ENCODE measurements at regions of chr6 and their contacts with region 1.

Region 1: GRCh38 chr6:158718461-158719046 is 68.7 kb downstream of the SYTL3 start:
- DNase-seq: peak; percentile 77 to 82
- H3K4me3 ChIP-seq: no peak overlapping the region
- H3K27ac ChIP-seq: no peak overlapping the region
- H3K4me1 ChIP-seq: peaks cover 0 to 9% (median 3%) of the 10 kb centered on the region in 4 experiments; a peak in 4 of 7 replicates
- H3K27me3 ChIP-seq: no peaks in the 10 kb centered on the region
- CTCF ChIP-seq: peak; percentile 84 to 94 (median 93)
- EP300 ChIP-seq: no peak; a peak in 1 of 3 replicates
- POLR2A ChIP-seq: no peak
- RAD21 ChIP-seq: peak; percentile 95

Region 2: DNA sequence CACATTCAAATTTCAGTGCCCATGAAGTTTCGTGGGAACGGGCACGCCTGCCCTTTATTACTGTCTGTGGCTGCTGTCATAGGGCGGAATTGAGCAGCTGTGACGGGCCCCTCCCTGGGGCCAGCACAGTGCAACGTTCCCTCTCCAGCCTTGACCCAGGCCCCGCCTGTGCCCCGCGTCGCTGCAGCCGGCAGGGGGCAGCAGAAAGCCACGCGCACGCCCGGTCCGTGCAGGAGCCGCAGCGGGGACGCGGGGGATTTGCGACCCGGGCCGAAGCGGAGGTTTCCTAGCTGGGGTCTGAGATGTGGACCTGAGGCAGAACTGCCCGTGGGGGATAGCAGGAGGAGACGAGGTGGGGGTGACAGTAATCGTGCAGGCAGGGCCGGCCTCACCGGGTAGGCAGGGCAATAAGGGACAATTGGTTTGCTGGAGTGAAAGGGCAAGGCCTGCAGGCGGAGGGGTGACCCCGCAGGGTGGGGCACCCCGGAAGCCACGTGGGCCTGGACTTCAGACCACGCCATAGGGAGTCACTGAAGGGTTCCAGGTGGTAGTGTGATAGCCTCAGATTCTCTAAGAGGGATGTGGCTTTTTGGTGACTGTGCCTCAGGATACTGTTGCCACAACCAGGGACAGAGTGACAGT is 14.3 kb before region 1 on chr6:
- CTCF ChIA-PET with region 1: interaction called, 37 read pairs
- POLR2A ChIA-PET with region 1: interaction called, 4 read pairs
- DNase-seq: peak; percentile 41 to 97
- H3K4me3 ChIP-seq: peak overlapping the region in 3 of 4 experiments; percentile 4 to 46 (median 19); a peak in 3 of 8 replicates
- H3K27ac ChIP-seq: no peak overlapping the region
- H3K4me1 ChIP-seq: peaks cover 0 to 4% (median 1%) of the 10 kb centered on the region in 4 experiments; a peak in 1 of 7 replicates
- H3K27me3 ChIP-seq: no peaks in the 10 kb centered on the region
- CTCF ChIP-seq: peak; percentile 93 to 94 (median 94)
- EP300 ChIP-seq: no peak
- POLR2A ChIP-seq: no peak
- RAD21 ChIP-seq: peak; percentile 95

Region 3: DNA sequence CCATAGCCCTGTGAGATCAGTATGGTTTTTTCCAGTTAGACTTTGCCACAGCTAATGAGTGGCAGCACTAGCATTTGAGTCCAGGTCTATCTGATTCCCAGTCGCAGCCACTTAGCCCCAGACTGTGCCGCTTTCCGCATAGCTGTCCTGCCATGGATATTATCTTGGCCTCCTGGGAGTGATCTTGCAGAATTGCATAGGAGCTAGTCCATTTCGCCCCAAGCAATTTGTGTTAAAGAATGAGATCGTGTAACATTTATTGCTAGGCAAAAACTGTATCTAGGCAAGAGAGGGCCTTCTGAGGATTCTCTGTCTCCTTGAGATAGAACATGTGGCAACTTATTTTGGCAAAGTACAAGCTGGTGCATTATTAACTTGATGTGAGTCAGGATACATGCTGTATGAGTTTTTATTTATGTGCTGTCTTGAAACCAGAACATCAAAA is 26.5 kb after region 1 on chr6:
- CTCF ChIA-PET with region 1: interaction called, 19 read pairs
- POLR2A ChIA-PET with region 1: no interaction called
- DNase-seq: no peak
- H3K4me3 ChIP-seq: no peak overlapping the region
- H3K27ac ChIP-seq: no peak overlapping the region
- H3K4me1 ChIP-seq: no peaks in the 10 kb centered on the region
- H3K27me3 ChIP-seq: no peaks in the 10 kb centered on the region
- CTCF ChIP-seq: no peak
- EP300 ChIP-seq: no peak
- POLR2A ChIP-seq: no peak
- RAD21 ChIP-seq: no peak

Region 4: DNA sequence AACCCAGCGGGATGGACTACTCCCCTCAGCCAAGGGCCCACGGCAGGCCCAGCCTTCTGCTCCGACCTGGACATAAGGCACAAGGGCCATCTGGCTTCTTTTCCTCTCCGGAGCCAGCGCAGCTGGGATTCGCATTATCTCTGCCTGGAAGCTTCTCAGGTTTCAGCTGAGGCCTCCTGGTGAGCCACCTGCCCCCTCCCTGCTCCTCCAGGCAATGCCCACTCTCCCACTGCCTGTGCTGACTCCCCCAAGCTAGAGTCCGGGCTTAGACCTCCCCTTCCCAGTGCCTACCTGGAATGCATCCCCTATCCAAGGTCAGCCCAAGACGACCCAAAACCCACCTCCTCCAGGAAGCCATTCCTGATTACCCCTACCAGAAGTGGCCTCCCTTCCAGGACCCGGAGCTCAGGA is 39.9 kb after region 1 on chr6:
- CTCF ChIA-PET with region 1: interaction called, 7 read pairs
- POLR2A ChIA-PET with region 1: interaction called, 38 read pairs
- DNase-seq: peak; percentile 34 to 71
- H3K4me3 ChIP-seq: no peak overlapping the region
- H3K27ac ChIP-seq: no peak overlapping the region
- H3K4me1 ChIP-seq: peaks cover 0 to 20% (median 10%) of the 10 kb centered on the region in 4 experiments; a peak in 6 of 7 replicates
- H3K27me3 ChIP-seq: no peaks in the 10 kb centered on the region
- CTCF ChIP-seq: no peak
- EP300 ChIP-seq: no peak
- POLR2A ChIP-seq: no peak
- RAD21 ChIP-seq: no peak

Region 5: GRCh38 chr6:158784505-158784904 is 66.0 kb after region 1 on chr6:
- CTCF ChIA-PET with region 1: interaction called, 18 read pairs
- POLR2A ChIA-PET with region 1: no interaction called
- DNase-seq: no peak
- H3K4me3 ChIP-seq: no peak overlapping the region
- H3K27ac ChIP-seq: no peak overlapping the region
- H3K4me1 ChIP-seq: peaks cover 0 to 2% (median under 1%) of the 10 kb centered on the region in 4 experiments; a peak in 2 of 7 replicates
- H3K27me3 ChIP-seq: no peaks in the 10 kb centered on the region
- CTCF ChIP-seq: no peak
- EP300 ChIP-seq: no peak
- POLR2A ChIP-seq: no peak
- RAD21 ChIP-seq: no peak

Region 6: GRCh38 chr6:158916617-158917016 is 198.1 kb after region 1 on chr6:
- CTCF ChIA-PET with region 1: no interaction called
- POLR2A ChIA-PET with region 1: no interaction called
- DNase-seq: no peak
- H3K4me3 ChIP-seq: no peak overlapping the region
- H3K27ac ChIP-seq: no peak overlapping the region
- H3K4me1 ChIP-seq: peaks cover 2 to 13% (median 10%) of the 10 kb centered on the region in 4 experiments
- H3K27me3 ChIP-seq: no peaks in the 10 kb centered on the region
- CTCF ChIP-seq: no peak
- EP300 ChIP-seq: no peak
- POLR2A ChIP-seq: no peak
- RAD21 ChIP-seq: no peak